Breast epithelium (tissue), 4 donors: ENCODE measurements at regions of chr21 and their contacts with region 1.

Region 1: GRCh38 chr21:31959881-31960280 is 87.1 kb downstream of the HUNK start:
- DNase-seq: no peak
- H3K4me3 ChIP-seq: no peak overlapping the region
- H3K27ac ChIP-seq: no peak overlapping the region
- H3K4me1 ChIP-seq: no peaks in the 10 kb centered on the region
- H3K27me3 ChIP-seq: no peaks in the 10 kb centered on the region
- CTCF ChIP-seq: no peak
- POLR2A ChIP-seq: no peak

Region 2: GRCh38 chr21:31943561-31943960 is 16.3 kb before region 1 on chr21:
- intact Hi-C with region 1: loop called (anchors 2 kb)
- DNase-seq: no peak
- H3K4me3 ChIP-seq: no peak overlapping the region
- H3K27ac ChIP-seq: no peak overlapping the region
- H3K4me1 ChIP-seq: no peaks in the 10 kb centered on the region
- H3K27me3 ChIP-seq: no peaks in the 10 kb centered on the region
- CTCF ChIP-seq: no peak
- POLR2A ChIP-seq: no peak